Head of caudate nucleus (tissue), 42 donors: ENCODE measurements at regions of chrX and their contacts with region 1.

Region 1: GRCh38 chrX:119067023-119067739 is 5.6 kb upstream of the CT47C1 start:
- DNase-seq: peak; percentile 14 to 85 (median 64)

Region 2: DNA sequence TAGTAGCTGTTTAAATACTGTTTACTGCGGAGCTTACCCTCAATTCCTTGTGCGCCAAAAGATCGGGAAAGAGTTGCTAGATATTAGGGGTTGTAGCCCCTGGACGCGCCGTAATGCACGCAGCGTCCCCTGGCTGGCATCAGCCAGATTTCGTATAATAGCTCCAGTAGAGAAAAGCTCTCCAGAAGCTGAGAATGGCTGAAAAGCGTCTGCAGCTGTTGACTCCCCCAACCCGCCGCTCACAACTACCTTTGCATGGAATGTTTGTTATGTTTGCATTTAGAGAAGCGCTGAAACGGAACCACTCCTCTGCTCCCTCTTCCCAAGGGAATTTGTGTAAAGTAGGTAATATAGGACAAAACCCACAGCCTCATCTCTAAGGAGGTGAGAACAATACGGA is 567.9 kb before region 1 on chrX:
- intact Hi-C with region 1: no loop called
- DNase-seq: peak in 12 of 42 donors; percentile 8 to 52 (median 20)

Region 3: GRCh38 chrX:118847676-118848075 is 219.5 kb before region 1 on chrX:
- intact Hi-C with region 1: loop called (anchors 5 kb)
- DNase-seq: peak in 3 of 42 donors; percentile 34 to 53 (median 38)

Region 4: GRCh38 chrX:118928151-118928550 is 139.0 kb before region 1 on chrX:
- intact Hi-C with region 1: no loop called
- DNase-seq: no peak